Activated CD8-positive, alpha-beta T cell treated with anti-CD3 and anti-CD28 coated beads, Interleukin-2, amount 10 ng/mL, durations not matched to agents 7 days and 5 days (primary cell): ENCODE measurements at regions of chr2 and their contacts with region 1.

Region 1: DNA sequence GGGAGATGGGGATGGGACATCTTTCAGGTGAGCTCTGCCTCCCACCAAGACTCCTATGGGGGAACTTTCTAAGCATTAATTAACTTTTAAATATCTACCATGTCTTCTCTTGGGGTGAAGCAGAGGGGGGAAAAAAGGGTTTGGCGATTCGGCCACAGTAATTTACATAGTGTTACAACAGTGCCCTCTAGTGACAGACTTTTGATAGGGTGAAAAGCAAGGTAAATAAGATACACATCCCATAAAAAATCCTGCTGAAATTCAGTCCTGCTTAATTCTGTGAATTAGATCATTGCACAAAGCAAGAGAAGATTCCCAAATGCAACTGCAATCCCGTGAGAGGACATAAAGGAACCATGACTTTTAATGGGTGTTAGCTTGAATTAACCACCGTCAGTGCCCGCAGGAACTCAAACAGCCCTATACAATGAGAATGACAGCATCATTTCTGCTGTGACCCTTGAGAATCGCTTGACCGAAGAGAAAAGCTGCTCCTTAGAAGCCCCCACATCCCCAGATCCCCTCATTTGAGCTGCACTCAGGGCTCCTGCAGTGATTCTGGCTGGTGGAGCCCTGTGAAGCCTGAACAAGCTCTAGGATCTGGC is 32.8 kb downstream of the FAM124B start:
- DNase-seq: peak; percentile 34
- ATAC-seq: no peak
- H3K4me3 Mint-ChIP-seq: no peak overlapping the region
- H3K27ac Mint-ChIP-seq: no peak overlapping the region
- H3K4me1 Mint-ChIP-seq: no peaks in the 10 kb centered on the region
- H3K27me3 Mint-ChIP-seq: peaks cover 4% of the 10 kb centered on the region

Region 2: DNA sequence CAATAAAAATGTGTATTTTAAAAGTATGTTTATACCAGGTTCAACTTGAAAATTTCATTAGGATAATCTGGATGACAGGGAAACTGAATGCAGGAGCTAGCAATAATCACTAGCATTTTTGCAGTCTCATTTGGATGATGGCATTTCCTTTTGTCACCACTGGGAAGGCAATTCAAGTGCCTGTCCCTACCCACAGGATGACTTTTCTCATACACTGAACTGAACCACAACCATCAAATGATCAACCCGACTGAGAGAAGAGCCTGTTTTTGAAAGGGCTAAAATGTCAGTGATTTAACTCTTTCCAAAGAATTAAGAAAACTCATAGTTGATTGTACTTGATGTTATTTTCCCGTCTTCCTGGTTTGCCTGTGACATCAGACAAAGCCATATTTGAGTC is 82.2 kb before region 1 on chr2:
- CTCF ChIA-PET with region 1: no interaction called
- POLR2A ChIA-PET with region 1: no interaction called
- DNase-seq: no peak
- ATAC-seq: peak; percentile 49
- H3K4me3 Mint-ChIP-seq: no peak overlapping the region
- H3K27ac Mint-ChIP-seq: no peak overlapping the region
- H3K4me1 Mint-ChIP-seq: no peaks in the 10 kb centered on the region
- H3K27me3 Mint-ChIP-seq: peaks cover 34% of the 10 kb centered on the region

Region 3: DNA sequence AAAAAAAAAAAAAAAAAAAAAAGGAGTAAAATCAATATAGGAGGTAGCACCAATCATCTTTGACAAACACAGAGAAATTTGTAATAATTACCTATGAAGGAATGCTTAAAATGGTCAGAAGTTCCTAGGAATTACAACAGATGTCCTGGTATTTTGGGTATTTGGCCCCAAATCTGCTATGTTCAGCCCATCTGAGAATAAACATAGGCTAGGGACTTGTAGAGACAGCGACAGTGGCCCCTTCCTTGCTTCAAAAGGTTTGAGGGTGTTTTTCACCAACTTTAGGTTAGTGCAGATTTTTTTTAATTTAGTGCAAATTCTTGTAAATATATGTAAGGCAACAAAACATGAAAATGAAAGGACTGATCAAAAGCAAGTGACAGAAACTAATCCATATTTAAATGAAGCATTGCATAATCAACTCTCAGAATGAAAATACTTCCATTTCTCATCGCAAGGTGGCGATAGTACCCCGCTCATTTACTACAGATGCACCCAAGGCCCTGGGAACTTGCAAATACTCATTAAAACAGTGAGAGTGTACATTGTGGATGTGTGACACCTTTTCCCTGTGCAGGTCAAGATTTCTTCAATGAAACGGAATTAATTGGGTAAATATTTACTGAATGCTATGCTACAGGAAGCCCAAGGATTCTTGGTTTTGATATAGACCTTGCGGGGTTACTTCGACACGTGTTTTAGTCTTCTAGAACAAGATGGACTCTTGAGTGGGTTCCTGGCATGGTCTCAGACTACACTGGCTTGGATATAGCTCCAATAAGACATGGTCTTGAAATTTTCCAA is 11.8 kb before region 1 on chr2:
- CTCF ChIA-PET with region 1: interaction called, 19 read pairs
- POLR2A ChIA-PET with region 1: no interaction called
- DNase-seq: peak; percentile 71
- ATAC-seq: peak; percentile 69
- H3K4me3 Mint-ChIP-seq: no peak overlapping the region
- H3K27ac Mint-ChIP-seq: no peak overlapping the region
- H3K4me1 Mint-ChIP-seq: no peaks in the 10 kb centered on the region
- H3K27me3 Mint-ChIP-seq: peaks cover 8% of the 10 kb centered on the region

Region 4: GRCh38 chr2:224386876-224387275 is 17.7 kb after region 1 on chr2:
- CTCF ChIA-PET with region 1: interaction called, 12 read pairs
- POLR2A ChIA-PET with region 1: no interaction called
- DNase-seq: no peak
- ATAC-seq: no peak
- H3K4me3 Mint-ChIP-seq: no peak overlapping the region
- H3K27ac Mint-ChIP-seq: no peak overlapping the region
- H3K4me1 Mint-ChIP-seq: no peaks in the 10 kb centered on the region
- H3K27me3 Mint-ChIP-seq: peaks cover 3% of the 10 kb centered on the region

Region 5: DNA sequence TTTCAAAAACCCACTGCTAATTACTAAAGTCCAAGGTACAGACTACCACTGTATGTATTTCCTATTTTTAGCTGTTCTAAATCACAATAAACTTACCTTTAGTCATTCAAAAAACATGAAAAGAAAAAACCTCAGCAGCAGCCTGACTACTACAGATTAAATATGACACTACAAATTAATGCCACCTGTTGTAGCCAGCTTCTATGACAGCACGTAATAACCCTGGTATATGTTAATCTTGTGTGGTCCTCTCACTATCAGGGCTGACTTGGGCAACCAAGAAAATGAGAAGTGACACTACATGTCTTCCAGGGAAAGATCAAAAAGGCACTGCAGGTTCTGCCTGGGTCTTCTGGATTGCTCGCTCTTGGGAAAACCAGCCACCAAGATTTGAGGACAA is 123.4 kb after region 1 on chr2:
- CTCF ChIA-PET with region 1: no interaction called
- POLR2A ChIA-PET with region 1: no interaction called
- DNase-seq: no peak
- ATAC-seq: no peak
- H3K4me3 Mint-ChIP-seq: no peak overlapping the region
- H3K27ac Mint-ChIP-seq: no peak overlapping the region
- H3K4me1 Mint-ChIP-seq: peaks cover 14% of the 10 kb centered on the region
- H3K27me3 Mint-ChIP-seq: no peaks in the 10 kb centered on the region

Region 6: DNA sequence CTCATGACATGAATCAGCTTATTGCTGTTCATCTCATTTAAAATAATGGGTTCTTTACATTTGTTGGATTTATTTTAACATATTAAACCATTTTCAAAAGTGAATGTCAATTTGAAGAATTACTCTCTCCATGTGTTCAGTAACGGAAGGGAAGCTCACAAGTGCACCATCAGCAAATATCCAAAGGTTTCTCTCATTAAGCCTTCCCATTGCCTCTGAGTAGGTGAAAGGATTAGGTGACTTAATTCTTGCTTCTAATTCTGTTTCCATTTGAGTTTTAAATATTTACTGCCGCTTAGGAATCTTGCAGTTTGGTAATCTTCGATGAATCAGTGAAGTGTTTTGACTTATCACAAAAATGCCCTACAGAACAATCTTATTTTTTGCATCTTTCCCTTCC is 885.2 kb after region 1 on chr2:
- CTCF ChIA-PET with region 1: no interaction called
- POLR2A ChIA-PET with region 1: no interaction called
- DNase-seq: no peak
- ATAC-seq: no peak
- H3K4me3 Mint-ChIP-seq: no peak overlapping the region
- H3K27ac Mint-ChIP-seq: no peak overlapping the region
- H3K4me1 Mint-ChIP-seq: no peaks in the 10 kb centered on the region
- H3K27me3 Mint-ChIP-seq: no peaks in the 10 kb centered on the region